Heart left ventricle (tissue), 16 donors: ENCODE measurements at regions of chr2 and their contacts with region 1.

Region 1: DNA sequence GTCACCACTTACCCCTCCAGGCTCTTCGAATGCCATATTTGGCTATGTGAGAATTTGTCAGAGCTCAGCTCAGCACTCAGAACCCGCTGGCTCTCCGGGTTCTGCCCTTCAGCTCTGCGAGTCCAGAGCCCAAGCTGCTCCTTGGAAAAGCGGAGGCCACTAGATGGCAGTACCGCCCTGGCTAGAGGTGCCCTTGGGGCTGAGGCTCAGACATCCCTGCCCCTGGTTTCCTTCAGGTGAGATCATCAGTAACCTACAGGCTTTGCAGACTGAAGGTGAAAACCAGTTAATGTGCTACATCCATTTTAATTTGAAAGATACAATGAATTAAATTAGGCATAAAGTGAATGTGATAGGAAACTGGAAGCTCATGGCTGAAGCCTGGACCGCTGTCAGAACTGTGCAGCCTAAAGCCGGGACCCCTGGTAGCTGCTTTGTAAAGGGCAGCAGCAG is 285.6 kb downstream of the AGAP1 start:
- DNase-seq: peak; percentile 52 to 84 (median 71)
- ATAC-seq: peak; percentile 81 to 94 (median 86)
- H3K4me3 ChIP-seq: no peak overlapping the region
- H3K27ac ChIP-seq: no peak overlapping the region
- H3K4me1 ChIP-seq: no peaks in the 10 kb centered on the region
- H3K27me3 ChIP-seq: no peaks in the 10 kb centered on the region
- CTCF ChIP-seq: peak; percentile 68 to 89 (median 80)
- POLR2A ChIP-seq: no peak

Region 2: DNA sequence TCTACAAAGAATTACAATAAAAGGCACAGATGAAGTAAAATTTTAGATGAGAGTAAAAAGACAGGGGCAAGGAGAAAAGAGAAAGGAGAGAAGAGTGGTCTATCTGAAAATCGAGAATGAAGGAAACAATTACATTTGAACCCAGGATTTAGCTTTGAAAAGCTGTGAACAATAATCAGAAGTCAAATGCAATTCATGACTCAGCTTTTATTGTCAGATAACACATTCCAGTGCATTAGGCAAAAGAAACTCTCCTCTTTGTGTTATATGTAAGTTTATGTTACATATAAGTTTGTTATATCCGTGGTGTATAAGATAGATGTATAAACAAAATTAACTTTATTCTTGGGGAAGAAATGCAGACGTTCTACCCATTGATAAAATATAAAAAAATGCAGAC is 104.2 kb after region 1 on chr2:
- intact Hi-C with region 1: no loop called
- DNase-seq: no peak
- ATAC-seq: no peak
- H3K4me3 ChIP-seq: no peak overlapping the region
- H3K27ac ChIP-seq: no peak overlapping the region
- H3K4me1 ChIP-seq: no peaks in the 10 kb centered on the region
- H3K27me3 ChIP-seq: no peaks in the 10 kb centered on the region
- CTCF ChIP-seq: no peak
- POLR2A ChIP-seq: no peak

Region 3: GRCh38 chr2:236052926-236053821 is 273.7 kb after region 1 on chr2:
- intact Hi-C with region 1: no loop called
- DNase-seq: no peak
- ATAC-seq: no peak
- H3K4me3 ChIP-seq: no peak overlapping the region
- H3K27ac ChIP-seq: no peak overlapping the region
- H3K4me1 ChIP-seq: no peaks in the 10 kb centered on the region
- H3K27me3 ChIP-seq: no peaks in the 10 kb centered on the region
- CTCF ChIP-seq: no peak
- POLR2A ChIP-seq: no peak

Region 4: GRCh38 chr2:236168110-236169067 is 388.9 kb after region 1 on chr2 and contains the start of gene GBX2:
- intact Hi-C with region 1: loop called in 2 of 10 experiments (anchors 5 kb)
- DNase-seq: peak in 1 of 5 donors; percentile 29
- ATAC-seq: peak; percentile 18 to 65 (median 35)
- H3K4me3 ChIP-seq: peak within 1 kb of the TSS; percentile 16 to 49 (median 40)
- H3K27ac ChIP-seq: no peak within 1 kb of the TSS
- H3K4me1 ChIP-seq: peaks cover 18 to 79% (median 46%) of the 10 kb centered on the region in 12 donors
- H3K27me3 ChIP-seq: peaks cover 86 to 100% (median 99%) of the 10 kb centered on the region in 9 donors
- CTCF ChIP-seq: no peak
- POLR2A ChIP-seq: no peak
- total RNA-seq, gene GBX2: 0.17 TPM in 1 of 9 donors, not detected in the others

Region 5: DNA sequence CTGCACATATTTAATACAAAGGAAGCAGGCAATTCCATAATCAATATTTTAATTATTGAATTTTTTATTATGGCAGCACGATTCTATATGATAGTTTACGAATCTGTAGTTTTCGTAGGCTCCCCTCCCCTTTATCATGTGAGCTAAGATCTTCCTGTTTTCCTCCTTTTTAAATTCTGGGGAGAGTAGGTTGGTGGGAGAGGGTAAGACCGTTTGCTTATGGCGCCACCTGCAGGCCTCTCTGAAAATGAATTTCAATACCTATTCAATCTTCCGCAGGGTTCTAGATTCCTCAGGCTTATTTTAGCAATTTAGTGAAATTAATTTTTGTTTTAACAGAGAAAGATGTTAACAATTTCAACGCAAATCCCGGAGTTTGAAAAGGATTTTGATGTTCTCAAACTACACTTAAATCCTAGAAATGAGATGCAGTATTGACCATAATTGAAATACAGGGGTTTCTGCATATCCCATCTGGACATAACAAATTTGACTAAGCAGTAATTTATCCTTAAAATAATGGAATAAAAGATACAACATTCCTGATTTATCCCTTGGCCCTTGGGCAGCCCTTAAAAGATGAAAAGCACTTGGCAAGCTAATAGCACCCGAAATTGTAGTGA is 401.5 kb after region 1 on chr2:
- intact Hi-C with region 1: loop called in 9 of 10 experiments (anchors 1 to 5 kb)
- DNase-seq: no peak
- ATAC-seq: peak in 2 of 4 donors; percentile 33 to 44
- H3K4me3 ChIP-seq: no peak overlapping the region
- H3K27ac ChIP-seq: no peak overlapping the region
- H3K4me1 ChIP-seq: peaks cover 0 to 30% (median 15%) of the 10 kb centered on the region in 12 donors
- H3K27me3 ChIP-seq: peaks cover 37 to 62% (median 55%) of the 10 kb centered on the region in 9 donors
- CTCF ChIP-seq: peak; percentile 48 to 80 (median 71)
- POLR2A ChIP-seq: no peak

Region 6: GRCh38 chr2:237060534-237061312 is 1281.3 kb after region 1 on chr2:
- intact Hi-C with region 1: loop called in 5 of 10 experiments (anchors 10 kb)
- DNase-seq: peak in 3 of 5 donors; percentile 38 to 54 (median 51)
- ATAC-seq: peak; percentile 49 to 81 (median 72)
- H3K4me3 ChIP-seq: no peak overlapping the region
- H3K27ac ChIP-seq: no peak overlapping the region
- H3K4me1 ChIP-seq: peaks cover 0 to 6% (median 0%) of the 10 kb centered on the region in 12 donors
- H3K27me3 ChIP-seq: no peaks in the 10 kb centered on the region
- CTCF ChIP-seq: peak; percentile 34 to 82 (median 70)
- POLR2A ChIP-seq: no peak

Region 7: DNA sequence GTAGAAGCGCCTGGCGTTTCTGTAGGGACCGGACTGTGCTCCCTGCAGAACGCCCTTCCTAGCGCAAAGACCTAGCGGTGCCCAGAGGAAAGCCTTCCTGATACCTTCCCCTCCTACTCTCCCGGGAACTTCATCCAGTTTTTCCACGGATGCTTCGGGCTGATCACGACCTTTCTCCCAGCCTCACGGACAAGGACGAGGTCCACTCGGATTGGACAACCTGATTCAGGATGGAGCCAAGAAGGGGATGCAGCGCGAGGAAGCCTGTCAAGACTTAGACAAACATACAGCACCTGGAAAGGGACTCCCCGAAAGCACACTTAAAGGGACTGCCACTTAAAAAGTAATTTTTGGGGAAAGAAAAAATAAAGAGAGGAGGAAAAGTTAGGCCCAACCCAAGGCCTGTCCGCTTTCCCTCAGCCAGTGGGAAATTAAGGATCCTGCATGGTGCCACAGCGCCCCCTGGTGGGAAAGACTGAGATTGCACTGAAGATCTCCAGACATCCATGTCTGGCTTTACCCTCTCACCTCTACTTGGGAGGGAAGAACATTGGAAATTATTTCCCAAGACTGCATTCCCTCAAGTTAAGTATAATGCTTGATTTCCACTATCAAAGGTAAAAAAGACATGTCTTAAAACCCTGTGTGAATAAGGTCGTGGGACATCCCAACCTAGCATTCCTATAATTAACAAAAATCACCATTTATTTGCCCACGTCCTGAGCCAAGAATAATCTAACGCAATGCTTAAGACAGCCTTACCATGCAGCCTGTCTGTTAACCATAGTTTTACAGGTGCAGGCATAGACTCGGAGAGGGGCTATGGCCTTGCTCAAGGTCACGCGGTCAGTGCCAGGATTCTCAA is 1292.8 kb after region 1 on chr2:
- intact Hi-C with region 1: loop called in 6 of 10 experiments (anchors 5 to 10 kb)
- DNase-seq: peak; percentile 60 to 82 (median 72)
- ATAC-seq: peak in 3 of 4 donors; percentile 55 to 65 (median 59)
- H3K4me3 ChIP-seq: no peak overlapping the region
- H3K27ac ChIP-seq: peak overlapping the region in 2 of 12 donors; percentile 58 to 64
- H3K4me1 ChIP-seq: peaks cover 0 to 40% (median 28%) of the 10 kb centered on the region in 12 donors
- H3K27me3 ChIP-seq: no peaks in the 10 kb centered on the region
- CTCF ChIP-seq: peak; percentile 92 to 99 (median 98)
- POLR2A ChIP-seq: no peak